Ovary (tissue), 10 donors: ENCODE measurements at regions of chr5 and their contacts with region 1.

Region 1: DNA sequence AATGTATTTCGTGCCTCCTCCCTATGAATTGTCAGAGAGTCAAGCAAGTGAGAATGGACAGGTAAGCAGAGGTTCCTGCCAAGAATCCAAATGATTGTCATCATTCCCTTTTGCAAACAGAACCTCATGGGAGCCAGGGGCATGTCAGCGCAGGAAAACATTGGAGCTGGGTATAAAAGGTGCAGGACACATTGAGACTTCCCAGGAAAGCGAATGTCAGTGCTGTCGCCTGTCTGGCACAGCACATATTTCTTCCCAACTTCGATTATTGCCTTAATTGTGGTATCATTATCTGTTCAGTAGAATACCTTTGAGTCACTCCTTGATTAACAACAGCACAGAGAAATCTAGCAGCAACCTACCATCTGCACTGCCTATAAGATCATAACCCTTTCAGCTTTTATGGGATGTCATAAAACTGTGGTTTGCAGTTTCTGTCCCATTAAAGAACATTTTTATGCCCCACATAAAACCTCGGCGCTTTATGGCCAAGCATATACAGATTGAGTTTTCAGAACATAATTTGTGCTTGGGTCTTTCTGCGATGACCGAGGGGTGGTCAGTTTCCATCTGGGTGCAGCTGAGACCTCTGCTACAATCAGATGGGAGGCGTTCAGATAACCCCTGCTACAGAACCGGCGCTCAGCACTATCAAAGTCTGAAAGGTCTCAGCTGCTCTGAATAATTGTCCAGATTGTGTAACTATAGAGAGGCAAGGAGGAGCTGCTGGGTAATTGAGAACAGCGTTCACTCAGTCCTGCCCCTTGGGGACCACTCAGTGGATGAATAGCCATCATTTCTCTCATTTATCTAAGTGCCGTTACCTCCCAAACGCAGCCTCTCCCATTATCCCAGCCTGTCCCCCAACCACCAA is 30.9 kb upstream of the WWC1 start:
- DNase-seq: no peak
- H3K4me3 ChIP-seq: no peak overlapping the region
- H3K27ac ChIP-seq: no peak overlapping the region
- H3K4me1 ChIP-seq: peaks cover 1% of the 10 kb centered on the region
- H3K27me3 ChIP-seq: no peaks in the 10 kb centered on the region
- CTCF ChIP-seq: no peak
- EP300 ChIP-seq: no peak
- POLR2A ChIP-seq: no peak

Region 2: DNA sequence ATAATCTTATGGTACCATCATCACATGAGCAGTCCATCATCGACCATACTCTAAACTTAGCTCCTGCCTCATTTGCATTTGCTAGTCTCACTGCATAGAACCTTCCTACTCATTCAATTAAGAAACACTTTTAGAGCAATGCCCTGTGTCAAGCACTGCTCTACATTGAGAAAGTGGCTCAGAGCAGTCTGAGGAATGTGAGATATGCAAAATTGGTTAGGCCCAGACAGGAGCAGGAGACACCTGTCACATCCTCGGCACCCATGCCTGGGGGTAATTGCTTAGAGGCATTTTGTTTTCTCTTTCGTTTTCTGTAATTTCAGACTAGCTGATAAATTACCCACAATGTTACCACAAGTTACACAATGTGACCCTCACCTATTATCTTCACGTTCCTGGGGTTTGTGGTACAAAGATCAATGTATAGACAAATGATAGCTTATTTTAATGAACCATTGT is 220.8 kb after region 1 on chr5:
- intact Hi-C with region 1: no loop called
- DNase-seq: no peak
- H3K4me3 ChIP-seq: no peak overlapping the region
- H3K27ac ChIP-seq: no peak overlapping the region
- H3K4me1 ChIP-seq: peaks cover 3% of the 10 kb centered on the region
- H3K27me3 ChIP-seq: no peaks in the 10 kb centered on the region
- CTCF ChIP-seq: no peak
- EP300 ChIP-seq: no peak
- POLR2A ChIP-seq: no peak

Region 3: DNA sequence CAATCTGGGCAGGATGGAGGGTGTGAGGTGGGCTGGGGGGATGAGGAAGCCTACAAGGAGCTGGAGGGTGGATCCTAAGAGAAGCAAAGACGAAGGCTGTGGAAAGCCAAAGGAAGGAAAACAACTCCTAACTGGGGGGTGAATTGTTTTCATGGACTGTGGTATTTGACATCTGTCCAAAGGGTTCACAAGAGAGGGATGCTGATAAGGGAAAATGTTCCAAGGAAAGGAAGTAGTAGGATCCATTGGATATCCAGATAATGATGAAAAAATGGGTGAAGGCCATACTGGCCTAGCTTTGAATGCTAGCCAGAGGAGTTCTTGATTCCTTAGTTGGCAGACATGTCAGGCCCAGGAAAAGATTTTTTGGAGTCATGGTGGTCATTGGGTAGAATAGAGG is 1793.3 kb after region 1 on chr5:
- intact Hi-C with region 1: loop called in 1 of 4 experiments (anchors 5 kb)
- DNase-seq: no peak
- H3K4me3 ChIP-seq: no peak overlapping the region
- H3K27ac ChIP-seq: no peak overlapping the region
- H3K4me1 ChIP-seq: no peaks in the 10 kb centered on the region
- H3K27me3 ChIP-seq: no peaks in the 10 kb centered on the region
- CTCF ChIP-seq: no peak
- EP300 ChIP-seq: no peak
- POLR2A ChIP-seq: no peak